Tibial artery (tissue), 4 donors: ENCODE measurements at regions of chr11 and their contacts with region 1.

Region 1: GRCh38 chr11:99432677-99433076 is 411.9 kb downstream of the CNTN5 start:
- DNase-seq: no peak
- H3K4me3 ChIP-seq: no peak overlapping the region
- H3K27ac ChIP-seq: no peak overlapping the region
- H3K4me1 ChIP-seq: no peaks in the 10 kb centered on the region
- H3K27me3 ChIP-seq: no peaks in the 10 kb centered on the region
- CTCF ChIP-seq: no peak

Region 2: GRCh38 chr11:99513368-99513767 is 80.7 kb after region 1 on chr11:
- intact Hi-C with region 1: no loop called
- DNase-seq: no peak
- H3K4me3 ChIP-seq: no peak overlapping the region
- H3K27ac ChIP-seq: no peak overlapping the region
- H3K4me1 ChIP-seq: no peaks in the 10 kb centered on the region
- H3K27me3 ChIP-seq: no peaks in the 10 kb centered on the region
- CTCF ChIP-seq: no peak

Region 3: GRCh38 chr11:99638073-99638553 is 205.4 kb after region 1 on chr11:
- intact Hi-C with region 1: no loop called
- DNase-seq: no peak
- H3K4me3 ChIP-seq: no peak overlapping the region
- H3K27ac ChIP-seq: no peak overlapping the region
- H3K4me1 ChIP-seq: no peaks in the 10 kb centered on the region
- H3K27me3 ChIP-seq: no peaks in the 10 kb centered on the region
- CTCF ChIP-seq: no peak

Region 4: DNA sequence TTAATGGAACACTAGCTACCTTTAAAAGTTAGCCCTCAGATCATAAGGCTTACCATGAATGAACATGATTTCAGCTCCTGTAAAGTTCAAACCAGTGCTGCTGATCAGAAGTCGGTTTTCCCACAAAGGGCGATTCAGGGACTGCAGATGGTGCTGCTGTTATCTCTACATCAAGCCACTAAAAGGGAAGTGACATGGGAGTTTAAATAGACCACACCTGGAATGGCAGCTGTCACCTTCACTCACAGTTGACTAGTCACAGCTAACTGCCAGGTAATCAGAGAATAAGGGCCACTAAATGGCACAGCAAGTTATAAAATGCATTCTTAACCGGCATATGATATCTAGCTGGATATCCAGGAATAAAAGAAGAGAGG is 673.3 kb after region 1 on chr11:
- intact Hi-C with region 1: loop called (anchors 5 kb)
- DNase-seq: no peak
- H3K4me3 ChIP-seq: no peak overlapping the region
- H3K27ac ChIP-seq: no peak overlapping the region
- H3K4me1 ChIP-seq: no peaks in the 10 kb centered on the region
- H3K27me3 ChIP-seq: no peaks in the 10 kb centered on the region
- CTCF ChIP-seq: no peak